ENCODE measurements at regions of chr1 and their contacts with region 1.

Region 1: DNA sequence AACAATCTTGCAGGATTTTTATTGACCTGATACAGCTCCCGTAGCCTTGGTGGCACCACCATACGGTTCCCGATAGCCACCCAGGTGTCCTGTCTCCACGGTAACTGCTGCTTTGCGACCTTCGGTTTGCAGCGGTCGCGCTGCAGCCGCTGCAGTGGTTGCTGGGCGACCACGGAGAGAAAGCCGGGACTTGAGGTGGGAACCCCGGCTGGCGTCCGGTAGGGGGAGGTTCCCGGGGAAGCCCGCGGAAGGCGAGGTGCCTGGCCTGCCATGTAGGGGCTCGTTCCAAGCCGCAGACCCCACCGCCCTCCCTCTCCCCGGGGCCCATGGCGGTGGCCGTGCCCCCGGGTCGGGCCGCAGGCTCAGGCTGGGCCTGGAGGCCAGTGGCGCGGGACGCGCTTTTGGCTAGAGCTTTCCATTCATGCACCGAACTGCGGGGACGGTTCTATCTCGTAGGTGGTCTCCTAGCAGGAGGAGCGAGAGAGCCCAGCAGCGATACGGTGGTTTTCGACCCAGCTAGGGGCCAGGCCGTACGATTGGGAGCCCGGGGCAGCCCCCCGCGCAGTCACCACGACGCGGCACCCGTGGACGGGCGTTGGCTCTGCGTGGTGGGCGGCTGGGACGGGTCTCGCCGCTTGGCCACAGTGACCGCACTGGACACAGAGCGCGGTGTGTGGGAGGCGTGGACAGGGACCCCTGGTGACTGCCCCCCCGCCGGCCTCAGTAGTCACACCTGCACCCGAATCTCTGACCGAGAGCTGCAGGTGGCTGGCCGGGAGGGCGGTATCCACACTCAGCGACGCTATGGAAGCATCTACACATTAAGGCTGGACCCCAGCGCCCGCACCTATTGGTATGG is at the start of gene KLHDC9:
- DNase-seq: peak; percentile 92
- H3K4me3 Mint-ChIP-seq: peak within 1 kb of the TSS; percentile 83
- H3K27ac Mint-ChIP-seq: peak within 1 kb of the TSS; percentile 99
- H3K4me1 Mint-ChIP-seq: peaks cover 34% of the 10 kb centered on the region
- H3K27me3 Mint-ChIP-seq: no peaks in the 10 kb centered on the region
- CTCF ChIP-seq: no peak
- total RNA-seq, gene KLHDC9: 5.3 and 7.0 TPM in 2 replicates

Region 2: GRCh38 chr1:160997323-160998038 is 101.0 kb before region 1 on chr1:
- CTCF ChIA-PET with region 1: interaction called, 24 read pairs
- intact Hi-C with region 1: loop called (anchors 2 kb)
- DNase-seq: peak; percentile 80
- H3K4me3 Mint-ChIP-seq: peak overlapping the region; percentile 2
- H3K27ac Mint-ChIP-seq: peak overlapping the region; percentile 71
- H3K4me1 Mint-ChIP-seq: peaks cover 56% of the 10 kb centered on the region
- H3K27me3 Mint-ChIP-seq: no peaks in the 10 kb centered on the region
- CTCF ChIP-seq: peak; percentile 68

Region 3: DNA sequence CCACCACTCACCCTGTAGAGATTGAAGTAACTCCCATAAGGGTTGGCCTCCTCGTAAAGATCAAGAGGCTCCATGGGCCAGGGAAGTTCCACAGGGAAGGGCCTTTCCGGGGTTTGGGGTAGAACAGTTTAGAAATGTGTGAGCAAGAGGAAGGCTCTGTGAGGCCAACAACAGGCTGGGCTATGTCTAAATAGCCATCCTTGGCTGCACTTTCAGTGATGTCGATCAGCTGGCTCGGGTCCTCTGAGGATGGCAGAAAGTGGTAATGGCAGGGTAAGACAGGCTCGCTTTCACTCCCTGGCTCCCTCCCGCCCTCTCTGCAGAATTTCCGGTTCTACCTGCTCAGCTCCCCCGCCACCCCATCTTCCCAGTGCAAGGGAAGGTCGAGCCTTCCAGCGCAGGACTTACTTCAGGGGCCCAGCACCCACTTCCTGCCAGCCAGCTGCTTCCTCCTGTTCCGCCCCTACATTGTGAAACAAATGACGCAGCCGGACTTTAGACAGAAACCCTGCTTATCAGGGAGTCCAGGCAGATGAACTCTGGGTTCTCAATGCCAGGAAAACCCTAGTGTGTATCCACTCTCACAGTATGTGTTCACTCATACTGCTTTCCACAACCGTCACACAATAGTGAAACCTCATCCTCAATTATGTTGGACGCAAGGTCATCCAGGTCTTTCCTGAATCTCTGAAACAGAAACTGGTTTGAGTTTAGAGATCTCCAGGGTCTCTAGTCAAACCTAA is 84.8 kb before region 1 on chr1:
- CTCF ChIA-PET with region 1: interaction called, 10 read pairs
- intact Hi-C with region 1: no loop called
- DNase-seq: peak; percentile 94
- H3K4me3 Mint-ChIP-seq: peak overlapping the region; percentile 44
- H3K27ac Mint-ChIP-seq: peak overlapping the region; percentile 95
- H3K4me1 Mint-ChIP-seq: peaks cover 60% of the 10 kb centered on the region
- H3K27me3 Mint-ChIP-seq: no peaks in the 10 kb centered on the region
- CTCF ChIP-seq: no peak

Region 4: DNA sequence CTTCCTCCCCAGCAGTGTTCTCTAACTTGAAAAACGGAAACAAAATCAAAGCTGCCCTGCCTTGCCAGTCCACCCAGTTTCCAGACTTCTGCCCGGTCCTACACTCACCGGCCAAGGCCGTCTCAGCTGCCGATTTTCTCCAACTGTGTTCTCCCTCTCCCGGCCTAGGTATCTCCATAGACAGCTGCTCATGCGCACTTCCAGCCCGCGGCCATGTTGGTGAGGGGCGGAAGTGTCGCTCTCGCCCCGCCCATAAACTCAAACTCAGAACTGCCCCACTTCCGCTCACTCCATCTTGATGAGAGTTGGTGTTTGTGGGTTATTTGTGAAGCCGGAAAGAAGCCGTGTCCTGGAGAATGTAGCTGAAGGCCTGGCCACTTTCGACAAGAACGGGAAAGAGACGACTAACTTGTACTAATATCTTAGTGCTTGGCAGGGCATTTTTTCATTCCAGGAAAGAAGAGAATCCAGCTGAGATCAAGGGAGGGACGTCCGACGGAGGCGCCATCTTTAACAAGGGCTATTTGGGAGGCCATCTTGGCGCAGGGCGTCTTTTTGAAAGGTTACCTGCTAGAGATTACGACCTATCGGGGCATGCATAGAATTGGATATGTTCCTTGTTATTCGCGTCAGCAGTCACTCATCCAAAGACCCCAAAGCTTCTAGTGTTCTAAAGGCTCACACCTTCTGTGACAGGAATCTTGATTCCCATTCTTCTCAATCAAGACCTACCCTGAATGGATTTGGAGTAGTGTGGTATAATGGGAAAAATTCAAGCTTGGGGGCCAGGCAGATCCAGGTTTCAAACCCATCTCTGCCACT is 52.5 kb before region 1 on chr1 and contains the start of gene USF1:
- CTCF ChIA-PET with region 1: interaction called, 17 read pairs
- intact Hi-C with region 1: loop called (anchors 1 kb)
- DNase-seq: peak; percentile 94
- H3K4me3 Mint-ChIP-seq: peak within 1 kb of the TSS; percentile 88
- H3K27ac Mint-ChIP-seq: peak within 1 kb of the TSS; percentile 95
- H3K4me1 Mint-ChIP-seq: no peaks in the 10 kb centered on the region
- H3K27me3 Mint-ChIP-seq: no peaks in the 10 kb centered on the region
- CTCF ChIP-seq: no peak
- total RNA-seq, gene USF1: 72.1 and 75.4 TPM in 2 replicates

Region 5: DNA sequence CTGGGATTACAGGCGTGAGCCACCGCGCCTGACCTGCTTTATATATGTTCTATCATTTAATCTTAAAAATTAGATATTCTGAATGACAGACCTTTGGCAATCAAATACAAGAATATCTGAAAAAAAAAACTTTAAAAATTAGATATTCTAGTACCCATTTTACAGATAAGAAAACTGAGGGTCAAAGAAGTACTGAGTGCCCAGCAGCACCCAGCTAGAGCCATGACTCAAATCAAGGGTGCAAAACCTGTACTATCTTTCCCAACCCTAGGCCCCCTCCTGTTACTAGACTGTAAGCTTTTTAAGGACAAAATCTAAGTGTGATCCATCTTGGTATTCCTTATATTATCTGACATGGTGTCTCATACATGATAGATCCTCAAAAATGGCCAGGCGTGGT is 37.0 kb before region 1 on chr1:
- CTCF ChIA-PET with region 1: no interaction called
- intact Hi-C with region 1: loop called (anchors 5 kb)
- DNase-seq: no peak
- H3K4me3 Mint-ChIP-seq: no peak overlapping the region
- H3K27ac Mint-ChIP-seq: no peak overlapping the region
- H3K4me1 Mint-ChIP-seq: peaks cover 10% of the 10 kb centered on the region
- H3K27me3 Mint-ChIP-seq: peaks cover 9% of the 10 kb centered on the region
- CTCF ChIP-seq: no peak

Region 6: DNA sequence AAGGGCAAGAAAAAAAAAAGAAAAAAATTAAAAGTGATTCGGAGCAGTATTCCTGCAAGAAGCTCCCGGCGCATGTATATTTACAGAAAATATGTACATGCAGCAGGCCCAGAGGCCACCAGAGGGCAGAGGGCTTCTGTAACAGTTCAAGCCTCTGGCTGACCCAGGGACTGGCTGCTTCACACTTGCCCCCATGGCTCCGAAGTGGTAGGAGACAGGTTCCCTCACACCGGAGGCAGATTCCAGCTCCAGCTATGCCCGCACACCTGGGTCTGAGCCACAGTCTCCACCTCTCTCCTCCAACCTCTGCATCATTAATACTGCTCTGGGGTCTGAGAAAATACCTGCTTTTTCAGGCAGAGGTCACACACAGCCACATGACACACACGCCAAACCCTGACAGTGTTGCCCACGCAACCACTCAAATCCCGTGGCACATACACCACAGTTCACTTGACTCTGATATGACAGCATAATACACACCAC is 26.5 kb before region 1 on chr1:
- CTCF ChIA-PET with region 1: interaction called, 56 read pairs
- intact Hi-C with region 1: loop called (anchors 1 kb)
- DNase-seq: peak; percentile 71
- H3K4me3 Mint-ChIP-seq: no peak overlapping the region
- H3K27ac Mint-ChIP-seq: peak overlapping the region; percentile 38
- H3K4me1 Mint-ChIP-seq: no peaks in the 10 kb centered on the region
- H3K27me3 Mint-ChIP-seq: no peaks in the 10 kb centered on the region
- CTCF ChIP-seq: peak; percentile 80

Region 7: DNA sequence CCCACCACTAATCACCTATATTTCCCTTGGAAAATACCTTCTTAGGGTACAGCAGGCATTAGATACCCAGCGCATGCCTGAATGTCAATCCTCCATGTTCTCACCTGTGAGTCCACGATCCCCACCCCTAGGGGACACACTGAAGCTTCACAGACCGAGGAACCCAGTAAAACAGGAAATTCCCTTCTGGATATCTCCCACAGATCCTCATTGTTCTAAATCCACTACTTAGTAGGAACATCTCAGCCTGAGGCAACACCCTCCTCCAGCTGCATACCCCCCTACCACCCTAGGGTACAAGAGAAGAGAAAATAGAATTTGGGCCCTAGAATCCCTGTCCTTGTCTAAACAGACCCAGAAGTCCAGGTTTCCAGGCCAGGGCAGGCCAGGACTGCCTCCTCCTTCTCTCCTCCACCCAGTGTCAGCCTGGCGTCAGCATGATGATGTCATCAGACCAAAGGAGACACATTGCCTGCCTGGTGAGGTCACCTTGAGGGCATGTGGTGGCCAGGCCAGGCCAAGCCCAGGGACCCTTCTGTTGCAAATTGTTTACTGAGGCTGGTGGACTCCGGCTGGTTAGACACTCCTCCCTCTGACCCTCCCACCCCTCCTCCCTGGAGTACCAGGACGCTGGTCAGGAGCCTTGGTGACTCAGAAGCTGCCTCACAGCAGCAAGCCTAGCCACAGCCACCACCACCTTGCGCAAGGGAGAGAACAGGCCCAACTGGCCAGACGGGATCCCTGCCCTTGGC is 15.3 kb before region 1 on chr1:
- CTCF ChIA-PET with region 1: interaction called, 17 read pairs
- intact Hi-C with region 1: loop called (anchors 2 kb)
- DNase-seq: peak; percentile 99
- H3K4me3 Mint-ChIP-seq: peak overlapping the region; percentile 77
- H3K27ac Mint-ChIP-seq: peak overlapping the region; percentile 25
- H3K4me1 Mint-ChIP-seq: peaks cover 85% of the 10 kb centered on the region
- H3K27me3 Mint-ChIP-seq: no peaks in the 10 kb centered on the region
- CTCF ChIP-seq: no peak

Measured in Calu3 (cell line).